PC-3 (cell line): ENCODE measurements at regions of chr4 and their contacts with region 1.

Region 1: DNA sequence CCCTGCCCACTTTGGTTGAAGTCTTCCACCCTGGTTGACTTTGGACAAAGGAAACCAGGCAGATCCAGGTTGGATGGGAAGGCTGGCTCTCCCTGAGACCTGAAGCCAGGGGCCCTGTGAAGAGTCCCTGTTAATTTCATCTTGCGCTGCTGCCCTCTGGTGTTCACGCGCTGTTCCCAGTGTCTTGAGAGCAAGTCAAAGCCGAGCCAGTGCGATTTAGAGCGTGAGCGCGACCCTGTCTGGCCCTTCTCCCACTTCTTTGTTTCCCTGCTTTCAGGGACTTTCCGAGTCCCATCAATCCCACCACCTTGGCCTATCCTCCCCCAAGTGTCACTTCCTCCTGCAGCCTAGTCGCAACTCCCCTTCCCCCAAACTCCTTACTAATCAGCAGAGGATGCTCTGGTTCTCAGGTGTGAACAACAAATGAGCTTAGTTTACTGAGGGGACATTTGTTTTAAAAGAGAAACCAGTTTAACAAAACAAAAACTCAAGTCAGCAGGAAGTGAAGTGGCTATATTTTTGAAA is 25.8 kb upstream of the CHRNA9 start:
- DNase-seq: peak; percentile 86
- ATAC-seq: peak; percentile 98
- H3K4me3 ChIP-seq: peak overlapping the region; percentile 55
- H3K27ac ChIP-seq: peak overlapping the region; percentile 29
- H3K4me1 ChIP-seq: peaks cover 6% of the 10 kb centered on the region; the same call in 1 of the 2 replicates
- H3K27me3 ChIP-seq: no peaks in the 10 kb centered on the region
- CTCF ChIP-seq: peak; percentile 82

Region 2: GRCh38 chr4:40121515-40121914 is 187.8 kb before region 1 on chr4:
- CTCF ChIA-PET with region 1: no interaction called
- POLR2A ChIA-PET with region 1: no interaction called
- intact Hi-C with region 1: no loop called
- DNase-seq: peak; percentile 79
- ATAC-seq: peak; percentile 99
- H3K4me3 ChIP-seq: no peak overlapping the region
- H3K27ac ChIP-seq: peak overlapping the region; percentile 62
- H3K4me1 ChIP-seq: peaks cover 23% of the 10 kb centered on the region
- H3K27me3 ChIP-seq: no peaks in the 10 kb centered on the region
- CTCF ChIP-seq: no peak

Region 3: GRCh38 chr4:40149960-40150385 is 159.3 kb before region 1 on chr4:
- CTCF ChIA-PET with region 1: no interaction called
- POLR2A ChIA-PET with region 1: no interaction called
- intact Hi-C with region 1: loop called (anchors 1 kb)
- DNase-seq: peak; percentile 86
- ATAC-seq: peak; percentile 65
- H3K4me3 ChIP-seq: no peak overlapping the region
- H3K27ac ChIP-seq: peak overlapping the region; percentile 14
- H3K4me1 ChIP-seq: no peaks in the 10 kb centered on the region
- H3K27me3 ChIP-seq: no peaks in the 10 kb centered on the region
- CTCF ChIP-seq: peak; percentile 74

Region 4: DNA sequence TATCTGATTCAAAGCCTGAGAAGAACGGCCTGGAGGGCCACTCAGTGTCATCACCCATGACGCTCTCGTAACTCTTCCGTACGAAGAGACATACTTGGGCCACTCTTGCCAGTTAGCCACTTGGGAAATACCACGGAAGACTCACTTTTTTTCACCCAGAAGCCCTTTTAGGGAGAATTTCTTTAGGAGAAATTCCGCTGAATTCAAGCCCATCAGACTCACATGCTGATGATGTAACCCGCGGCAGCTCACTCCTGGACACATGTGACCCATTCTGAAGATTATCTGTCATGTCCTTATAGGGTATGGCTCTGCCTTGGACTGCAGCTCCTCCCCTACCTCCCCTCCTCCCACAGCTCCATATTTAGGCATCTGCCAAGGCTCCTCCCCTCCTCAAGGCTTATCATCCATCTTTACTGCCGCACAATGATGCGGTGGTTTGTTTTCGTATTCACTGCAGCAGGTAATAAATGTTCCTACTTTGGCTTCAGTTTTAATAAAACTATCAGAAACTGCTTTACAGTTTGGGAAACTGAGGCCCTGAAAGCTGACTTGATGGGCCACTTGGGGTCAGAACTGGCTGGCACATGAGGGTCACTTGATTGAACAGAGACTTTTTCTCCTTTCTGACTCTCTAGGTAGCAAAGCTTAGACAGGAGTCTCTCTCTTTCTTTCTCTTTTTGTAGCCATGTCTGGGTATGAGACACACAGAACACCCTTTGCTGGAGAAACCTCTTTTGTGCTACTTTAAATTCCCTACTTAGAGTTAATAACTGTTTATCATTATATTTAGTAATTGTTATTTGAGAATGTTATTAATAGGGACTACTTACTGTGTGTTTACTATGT is 70.4 kb before region 1 on chr4:
- CTCF ChIA-PET with region 1: no interaction called
- POLR2A ChIA-PET with region 1: no interaction called
- intact Hi-C with region 1: loop called (anchors 10 kb)
- DNase-seq: no peak
- ATAC-seq: no peak
- H3K4me3 ChIP-seq: no peak overlapping the region
- H3K27ac ChIP-seq: no peak overlapping the region
- H3K4me1 ChIP-seq: peaks cover 5% of the 10 kb centered on the region; the same call in 1 of the 2 replicates
- H3K27me3 ChIP-seq: no peaks in the 10 kb centered on the region
- CTCF ChIP-seq: no peak